Activated CD4-positive, alpha-beta T cell treated with anti-CD3 and anti-CD28 coated beads, Interleukin-2, amount 10 ng/mL, durations not matched to agents 7 days and 5 days (primary cell): ENCODE measurements at regions of chr2 and their contacts with region 1.

Region 1: GRCh38 chr2:64311948-64312621 is 141.9 kb upstream of the LGALSL start:
- DNase-seq: no peak
- H3K4me3 Mint-ChIP-seq: no peak overlapping the region
- H3K27ac Mint-ChIP-seq: no peak overlapping the region
- H3K4me1 Mint-ChIP-seq: no peaks in the 10 kb centered on the region
- H3K27me3 Mint-ChIP-seq: peaks cover 15% of the 10 kb centered on the region

Region 2: GRCh38 chr2:64283641-64284361 is 28.3 kb before region 1 on chr2:
- CTCF ChIA-PET with region 1: interaction called, 4 read pairs
- POLR2A ChIA-PET with region 1: interaction called, 10 read pairs
- DNase-seq: peak; percentile 50
- H3K4me3 Mint-ChIP-seq: no peak overlapping the region
- H3K27ac Mint-ChIP-seq: no peak overlapping the region
- H3K4me1 Mint-ChIP-seq: peaks cover 2% of the 10 kb centered on the region
- H3K27me3 Mint-ChIP-seq: peaks cover 3% of the 10 kb centered on the region

Region 3: DNA sequence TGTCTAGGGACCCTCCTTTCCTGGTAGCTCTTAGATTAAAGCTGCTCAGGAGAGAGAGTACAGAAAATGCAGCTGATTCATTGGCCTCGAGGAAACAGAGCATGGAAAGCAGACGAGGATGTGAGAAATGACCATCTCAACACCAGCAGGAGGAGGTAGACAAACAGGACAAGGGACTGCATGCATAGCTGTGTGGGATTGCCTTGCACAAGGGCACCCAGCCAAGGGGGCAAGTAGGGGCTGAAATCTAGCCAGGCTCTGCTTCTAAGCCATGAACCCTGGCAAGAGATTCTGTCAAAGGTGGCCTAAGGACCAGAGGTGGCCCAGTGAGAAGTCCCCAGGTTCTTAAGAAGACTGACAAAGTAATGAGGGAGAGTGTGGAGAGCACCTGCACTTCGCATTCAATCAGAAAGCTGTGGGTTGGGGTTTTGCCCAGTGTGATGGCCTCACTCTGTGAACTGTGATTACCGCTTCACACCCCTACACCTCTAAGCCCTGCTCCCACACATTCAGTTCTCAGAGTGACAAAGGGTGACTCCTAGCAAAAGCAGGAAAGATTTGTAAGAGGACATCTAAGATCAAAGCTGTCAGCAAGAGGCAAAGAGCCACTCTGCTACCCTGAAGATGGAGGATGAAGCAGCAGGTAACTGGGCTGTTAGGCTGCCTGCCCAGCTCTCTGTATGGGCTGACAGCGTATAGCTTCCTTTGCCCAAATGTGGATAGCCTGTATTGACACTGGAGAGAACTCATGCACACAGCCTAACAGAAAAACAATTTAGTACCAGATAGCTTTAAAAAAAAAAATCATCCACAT is 16.6 kb before region 1 on chr2:
- CTCF ChIA-PET with region 1: interaction called, 18 read pairs
- POLR2A ChIA-PET with region 1: no interaction called
- DNase-seq: no peak
- H3K4me3 Mint-ChIP-seq: no peak overlapping the region
- H3K27ac Mint-ChIP-seq: no peak overlapping the region
- H3K4me1 Mint-ChIP-seq: no peaks in the 10 kb centered on the region
- H3K27me3 Mint-ChIP-seq: peaks cover 13% of the 10 kb centered on the region